Activated naive CD4-positive, alpha-beta T cell treated with anti-CD3 and anti-CD28 coated beads for 36 hours (primary cell): ENCODE measurements at regions of chr3 and their contacts with region 1.

Region 1: DNA sequence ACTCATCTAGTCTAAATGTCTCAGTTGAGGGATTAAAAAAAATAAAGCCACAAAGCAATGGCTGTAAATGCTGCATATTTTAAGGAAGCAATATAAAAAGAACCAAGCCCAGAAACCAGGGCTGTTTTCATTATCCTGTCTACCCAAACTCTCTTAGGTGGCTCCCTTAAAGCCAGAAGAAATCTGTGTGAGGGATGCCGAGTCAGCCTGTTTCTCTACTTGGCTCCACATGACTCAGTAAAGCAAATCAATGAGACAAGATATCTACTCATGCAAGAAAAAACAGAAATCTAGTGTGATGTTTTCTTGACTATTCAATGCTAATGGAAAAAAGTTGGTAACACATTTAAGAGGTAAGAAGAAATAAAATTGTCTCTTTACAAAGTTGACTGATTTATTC is 296.2 kb downstream of the ZBTB20 start:
- DNase-seq: no peak
- H3K4me3 Mint-ChIP-seq: no peak overlapping the region
- H3K27ac Mint-ChIP-seq: no peak overlapping the region
- H3K4me1 Mint-ChIP-seq: peaks cover 10% of the 10 kb centered on the region
- H3K27me3 Mint-ChIP-seq: no peaks in the 10 kb centered on the region

Region 2: GRCh38 chr3:114827495-114827894 is 23.4 kb before region 1 on chr3:
- CTCF ChIA-PET with region 1: no interaction called
- intact Hi-C with region 1: no loop called
- DNase-seq: peak; percentile 11
- H3K4me3 Mint-ChIP-seq: no peak overlapping the region
- H3K27ac Mint-ChIP-seq: no peak overlapping the region
- H3K4me1 Mint-ChIP-seq: peaks cover 4% of the 10 kb centered on the region
- H3K27me3 Mint-ChIP-seq: no peaks in the 10 kb centered on the region

Region 3: DNA sequence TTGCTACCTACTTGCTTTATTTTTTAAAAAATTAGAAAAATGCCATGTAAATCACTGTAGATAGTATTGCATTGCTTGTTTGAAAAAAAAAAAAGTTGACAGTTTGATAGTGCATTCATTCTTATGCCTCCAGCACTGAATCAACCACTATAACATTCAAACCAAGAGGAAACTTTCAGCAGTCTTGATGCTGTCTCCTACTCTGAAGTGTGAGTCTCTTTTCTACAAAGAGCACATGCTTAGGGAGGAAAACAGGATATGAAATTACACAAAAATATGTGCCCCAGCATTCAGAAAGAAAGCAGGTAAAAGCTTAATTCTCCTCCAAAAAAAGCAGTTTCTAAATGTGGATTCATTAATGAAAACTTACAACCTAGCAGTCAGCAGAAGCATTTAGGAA is 217.9 kb after region 1 on chr3:
- CTCF ChIA-PET with region 1: no interaction called
- intact Hi-C with region 1: loop called (anchors 5 kb)
- DNase-seq: no peak
- H3K4me3 Mint-ChIP-seq: peak overlapping the region; percentile 51
- H3K27ac Mint-ChIP-seq: peak overlapping the region; percentile 33
- H3K4me1 Mint-ChIP-seq: peaks cover 39% of the 10 kb centered on the region
- H3K27me3 Mint-ChIP-seq: no peaks in the 10 kb centered on the region